Activated CD4-positive, alpha-beta T cell treated with anti-CD3 and anti-CD28 coated beads for 36 hours (primary cell): ENCODE measurements at regions of chr1 and their contacts with region 1.

Region 1: DNA sequence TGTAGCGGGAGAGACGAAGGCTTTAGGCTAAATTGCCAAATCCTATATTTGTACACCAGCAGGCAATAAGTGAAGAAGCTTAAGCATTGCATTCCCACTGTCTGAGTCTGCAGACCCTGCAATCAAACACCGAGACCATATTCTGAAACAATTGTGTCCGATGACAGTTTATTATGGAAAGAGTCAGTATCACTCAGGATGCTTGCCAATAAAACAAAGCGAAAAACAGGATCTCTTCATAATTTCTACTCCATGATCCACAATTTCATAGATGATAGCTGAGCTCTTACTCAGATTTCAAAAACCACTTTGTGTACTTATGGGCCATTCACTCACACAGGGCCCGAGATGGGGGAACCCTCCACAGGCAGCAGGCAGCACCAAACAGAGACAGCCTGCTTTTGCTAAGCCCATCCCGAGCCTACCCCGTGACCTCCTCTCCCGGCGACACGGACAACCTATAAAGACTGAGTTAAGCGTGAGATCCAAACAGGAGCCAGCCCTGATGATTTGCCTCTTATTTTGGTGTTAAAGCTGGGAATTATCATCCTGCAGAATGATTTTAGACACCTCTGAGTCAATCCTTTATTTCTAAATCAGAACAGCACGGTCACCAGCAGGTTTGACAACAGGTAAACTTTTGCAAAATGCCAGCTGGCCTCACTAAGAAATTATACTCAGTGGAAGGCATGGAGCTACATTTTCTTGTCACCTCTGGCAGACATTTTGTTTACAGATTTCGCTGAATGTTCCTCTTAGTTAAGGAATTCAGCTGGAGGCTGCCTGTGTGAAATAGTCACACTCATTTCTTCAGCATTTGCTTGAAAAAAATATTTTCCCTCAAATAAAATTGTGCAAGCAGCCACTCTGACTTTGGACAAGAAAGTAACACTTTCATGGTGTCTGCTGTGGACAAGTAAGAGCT is 212.4 kb downstream of the GPATCH2 start:
- DNase-seq: no peak
- ATAC-seq: no peak
- H3K4me3 Mint-ChIP-seq: no peak overlapping the region
- H3K27ac Mint-ChIP-seq: no peak overlapping the region
- H3K4me1 Mint-ChIP-seq: no peaks in the 10 kb centered on the region
- H3K27me3 Mint-ChIP-seq: peaks cover 8% of the 10 kb centered on the region

Region 2: DNA sequence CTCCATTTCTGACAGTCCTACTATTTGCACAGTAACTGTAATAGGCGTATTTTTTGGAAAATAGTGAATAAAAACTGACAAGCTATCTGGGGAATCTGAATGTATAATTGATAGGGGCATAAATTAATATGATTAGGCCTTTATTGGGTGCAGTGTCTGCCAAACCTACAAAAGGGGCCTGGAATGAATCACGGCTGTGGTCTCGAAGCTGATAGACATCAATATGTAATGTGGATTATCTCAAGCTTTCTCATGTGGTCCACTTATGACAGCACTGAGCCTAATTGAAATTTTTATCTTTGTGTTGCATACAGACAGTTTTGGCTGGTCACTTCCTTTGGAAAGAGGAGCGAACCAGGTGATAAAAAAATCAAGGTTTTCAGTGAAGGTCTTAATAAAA is 238.1 kb before region 1 on chr1:
- CTCF ChIA-PET with region 1: no interaction called
- POLR2A ChIA-PET with region 1: no interaction called
- intact Hi-C with region 1: no loop called
- DNase-seq: no peak
- ATAC-seq: no peak
- H3K4me3 Mint-ChIP-seq: no peak overlapping the region
- H3K27ac Mint-ChIP-seq: no peak overlapping the region
- H3K4me1 Mint-ChIP-seq: no peaks in the 10 kb centered on the region
- H3K27me3 Mint-ChIP-seq: no peaks in the 10 kb centered on the region

Region 3: DNA sequence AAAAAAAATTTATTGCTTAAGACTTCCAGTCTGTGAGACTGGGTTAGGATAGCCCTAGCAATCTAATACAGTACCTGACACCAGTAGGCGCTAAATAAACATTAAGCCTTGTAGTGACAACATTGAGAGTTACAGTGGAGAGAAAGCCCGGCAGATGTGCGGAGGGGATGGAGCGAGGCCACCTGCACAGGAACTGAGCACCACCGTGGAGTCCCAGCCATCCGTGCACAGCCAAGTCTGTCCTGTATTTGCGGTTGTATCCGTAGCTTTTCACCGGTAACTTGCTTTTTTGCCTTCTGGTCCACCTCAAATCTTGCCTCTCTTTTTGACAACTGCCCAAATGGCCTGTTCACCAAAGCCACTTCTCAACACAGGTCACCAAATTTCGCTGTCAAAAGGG is 47.8 kb before region 1 on chr1:
- CTCF ChIA-PET with region 1: no interaction called
- POLR2A ChIA-PET with region 1: interaction called, 13 read pairs
- intact Hi-C with region 1: no loop called
- DNase-seq: no peak
- ATAC-seq: no peak
- H3K4me3 Mint-ChIP-seq: no peak overlapping the region
- H3K27ac Mint-ChIP-seq: no peak overlapping the region
- H3K4me1 Mint-ChIP-seq: no peaks in the 10 kb centered on the region
- H3K27me3 Mint-ChIP-seq: no peaks in the 10 kb centered on the region

Region 4: GRCh38 chr1:217407534-217408001 is 11.0 kb before region 1 on chr1:
- CTCF ChIA-PET with region 1: no interaction called
- POLR2A ChIA-PET with region 1: no interaction called
- intact Hi-C with region 1: no loop called
- DNase-seq: no peak
- ATAC-seq: no peak
- H3K4me3 Mint-ChIP-seq: no peak overlapping the region
- H3K27ac Mint-ChIP-seq: no peak overlapping the region
- H3K4me1 Mint-ChIP-seq: no peaks in the 10 kb centered on the region
- H3K27me3 Mint-ChIP-seq: peaks cover 2% of the 10 kb centered on the region